Aorta (tissue), 5 donors: ENCODE measurements at regions of chr2 and their contacts with region 1.

Region 1: DNA sequence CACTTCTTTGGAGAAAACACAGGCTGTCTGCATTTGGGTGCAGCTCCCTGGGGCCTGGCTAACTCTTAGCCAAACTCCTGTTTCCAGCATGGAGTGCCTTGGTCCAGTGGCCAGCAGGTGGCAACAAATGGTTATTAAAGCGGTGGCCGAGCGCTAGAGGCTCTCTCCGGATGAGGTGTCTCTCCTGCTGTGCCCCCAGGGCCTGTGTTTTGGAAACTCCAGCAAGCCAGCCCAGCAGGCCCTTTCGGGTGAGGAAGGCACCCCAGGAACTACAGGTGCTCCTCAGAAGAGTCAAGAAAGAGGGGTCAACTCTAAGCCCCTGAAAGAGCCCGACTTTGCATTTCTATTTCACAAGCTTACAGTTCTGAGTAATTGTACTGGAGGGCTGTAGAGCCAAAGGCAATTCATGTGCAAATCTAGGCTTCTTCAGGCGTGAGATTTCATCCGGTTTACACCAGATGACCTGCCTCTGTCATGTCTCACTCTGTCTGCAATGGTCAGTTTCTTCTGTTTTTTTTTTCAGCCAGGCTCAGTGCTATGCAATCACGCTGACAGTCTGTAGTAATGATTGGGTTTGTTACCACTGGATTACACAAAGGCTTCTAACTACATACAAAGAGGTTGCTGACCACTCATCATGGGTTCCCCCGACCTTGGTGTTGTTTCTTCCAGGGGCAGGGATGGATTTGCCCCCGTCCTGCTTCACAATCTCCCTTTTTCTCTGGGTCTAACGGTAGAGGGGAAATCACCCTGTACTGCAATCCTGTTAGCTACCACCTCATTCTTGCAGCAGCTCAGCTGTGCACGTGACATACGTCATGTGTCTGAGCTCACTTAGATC is 7.6 kb upstream of the CHRNA1 start:
- DNase-seq: peak; percentile 78 to 91
- ATAC-seq: peak; percentile 94
- H3K4me3 ChIP-seq: no peak overlapping the region
- H3K27ac ChIP-seq: no peak overlapping the region
- H3K4me1 ChIP-seq: peaks cover 0 to 2% of the 10 kb centered on the region in 2 donors
- H3K27me3 ChIP-seq: no peaks in the 10 kb centered on the region

Region 2: DNA sequence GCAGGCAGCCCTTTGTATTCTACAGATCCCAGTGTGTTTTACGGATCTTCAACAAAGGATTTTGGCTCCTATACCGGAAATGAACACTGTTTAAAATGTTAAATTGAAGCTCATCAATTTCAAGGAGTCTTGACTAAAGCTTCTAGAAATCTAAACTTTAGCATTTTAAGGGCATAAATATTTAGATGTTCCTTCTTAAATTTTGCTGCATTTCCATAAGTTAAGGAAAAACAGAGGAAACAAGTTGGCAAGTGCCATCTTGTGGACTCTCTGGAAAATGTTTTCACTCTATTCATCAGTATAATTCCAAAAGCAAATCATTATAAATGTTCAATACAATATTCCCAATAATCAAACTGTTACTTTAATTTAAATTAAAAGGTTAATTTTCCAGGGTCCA is 213.8 kb after region 1 on chr2:
- intact Hi-C with region 1: loop called (anchors 1 to 2 kb)
- DNase-seq: no peak
- ATAC-seq: no peak
- H3K4me3 ChIP-seq: no peak overlapping the region
- H3K27ac ChIP-seq: no peak overlapping the region
- H3K4me1 ChIP-seq: no peaks in the 10 kb centered on the region
- H3K27me3 ChIP-seq: no peaks in the 10 kb centered on the region